ENCODE measurements at regions of chr19 and their contacts with region 1.

Region 1: DNA sequence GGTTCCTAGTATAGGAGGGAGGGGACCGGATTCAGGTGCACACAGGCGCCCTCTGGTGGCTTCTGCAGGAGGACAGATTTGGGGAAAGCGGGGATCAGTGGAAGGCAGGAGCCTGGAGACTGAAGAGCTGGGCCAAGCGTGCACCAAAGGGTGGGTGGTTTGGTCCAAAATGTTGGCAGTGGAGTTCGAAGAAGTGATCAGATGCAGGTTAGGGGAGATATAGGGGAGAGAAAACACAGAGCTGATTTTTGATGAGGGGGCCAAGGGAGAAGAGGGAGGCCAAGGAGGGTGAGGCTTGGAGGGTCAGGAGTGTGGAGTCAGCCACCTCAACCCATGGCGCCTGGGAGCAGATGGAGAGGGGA is 6.8 kb upstream of the CARM1 start:
- DNase-seq: peak; percentile 91
- ATAC-seq: peak; percentile 88

Region 2: GRCh38 chr19:10654493-10655304 is 209.8 kb before region 1 on chr19:
- intact Hi-C with region 1: loop called (anchors 5 kb)
- DNase-seq: peak; percentile 55
- ATAC-seq: peak; percentile 40

Region 3: DNA sequence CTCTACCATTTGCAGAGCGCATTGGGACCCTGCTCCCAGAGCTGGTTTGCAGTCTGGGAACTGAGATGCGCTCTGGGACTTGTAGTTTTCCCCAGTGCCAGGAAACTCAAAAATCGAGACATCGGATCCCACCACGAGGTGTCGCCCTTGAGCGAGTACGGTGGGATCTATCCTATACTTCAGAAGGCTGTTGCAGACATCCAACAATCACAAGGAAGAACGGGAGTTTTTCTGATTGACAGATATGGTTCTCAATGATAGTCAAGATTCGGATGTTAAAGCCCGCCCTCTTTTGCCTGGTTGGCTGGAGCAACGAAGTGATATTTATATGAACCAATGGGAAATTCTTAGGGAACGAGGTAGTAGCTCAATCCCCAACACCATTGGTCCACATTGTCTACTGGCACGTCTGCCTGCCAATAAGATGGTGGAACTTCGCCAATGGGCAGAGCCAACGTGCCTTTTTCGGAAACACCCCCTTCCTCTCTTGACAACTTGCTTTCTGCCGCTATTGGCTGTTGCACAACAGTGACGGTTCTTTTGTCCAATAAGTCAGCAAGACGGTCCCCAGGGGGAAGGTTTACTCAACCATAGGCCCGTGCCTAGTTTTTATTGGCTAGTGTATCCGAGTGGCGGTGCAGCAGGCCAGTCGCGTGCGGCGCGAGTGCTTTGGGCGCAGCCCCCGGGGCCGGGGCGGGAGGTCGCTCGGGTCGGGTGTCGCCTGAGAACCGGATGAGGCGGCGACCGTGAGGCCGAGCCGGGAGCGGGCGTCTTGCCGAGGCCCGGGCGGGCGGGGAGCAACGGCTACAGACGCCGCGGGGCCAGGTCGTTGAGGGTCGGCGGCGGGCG is 146.9 kb before region 1 on chr19 and contains the start of gene DNM2:
- intact Hi-C with region 1: loop called (anchors 2 kb)
- DNase-seq: peak; percentile 99
- ATAC-seq: peak; percentile 93
- total RNA-seq, gene DNM2: 180 TPM

Region 4: DNA sequence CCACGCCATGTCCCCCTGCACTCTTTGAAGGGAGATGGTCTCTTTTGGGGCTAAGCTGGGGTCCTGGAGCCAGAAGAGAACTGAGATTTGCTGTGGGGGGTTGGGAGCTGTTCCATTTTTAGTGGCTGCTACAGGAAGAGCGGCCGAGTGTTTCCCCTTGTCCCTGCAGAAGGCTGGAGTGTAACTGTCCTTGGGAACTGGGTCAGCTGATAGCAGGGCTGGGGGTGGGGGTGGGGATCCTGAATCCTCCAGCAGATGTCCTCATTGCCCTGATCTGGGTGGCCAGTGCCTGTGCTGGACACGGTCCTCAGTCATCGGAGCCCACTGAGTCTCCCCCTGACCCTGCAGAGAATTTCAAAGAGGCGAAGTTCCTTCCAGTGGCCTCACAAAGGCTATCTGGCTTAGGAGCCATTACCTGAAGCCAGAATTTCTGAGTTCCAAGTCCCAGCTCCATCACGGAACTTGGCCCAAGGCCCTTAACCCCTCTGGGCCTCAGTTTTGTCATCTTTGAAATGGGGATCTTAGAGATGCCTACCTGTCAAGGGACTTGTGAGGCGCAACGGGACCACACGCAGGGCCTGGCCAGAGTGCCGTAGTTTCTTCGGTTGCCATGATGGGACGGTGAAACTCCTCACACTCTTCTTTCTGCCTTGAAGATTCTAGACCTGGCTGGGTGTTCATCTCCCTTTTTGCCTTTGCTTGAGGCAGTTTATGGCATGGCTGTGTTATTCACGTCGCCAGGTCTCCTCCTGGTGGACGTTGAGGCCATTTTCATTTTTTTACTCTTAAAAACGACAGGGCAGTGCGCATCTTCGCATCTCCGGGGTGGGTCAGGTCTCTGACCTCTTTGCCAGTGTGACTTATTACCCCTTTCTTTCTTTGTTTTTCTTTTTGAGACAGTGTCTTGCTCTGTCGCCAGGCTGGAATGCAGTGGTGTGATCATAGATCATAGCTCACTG is 94.7 kb before region 1 on chr19:
- intact Hi-C with region 1: loop called (anchors 2 kb)
- DNase-seq: peak; percentile 73
- ATAC-seq: peak; percentile 79

Region 5: DNA sequence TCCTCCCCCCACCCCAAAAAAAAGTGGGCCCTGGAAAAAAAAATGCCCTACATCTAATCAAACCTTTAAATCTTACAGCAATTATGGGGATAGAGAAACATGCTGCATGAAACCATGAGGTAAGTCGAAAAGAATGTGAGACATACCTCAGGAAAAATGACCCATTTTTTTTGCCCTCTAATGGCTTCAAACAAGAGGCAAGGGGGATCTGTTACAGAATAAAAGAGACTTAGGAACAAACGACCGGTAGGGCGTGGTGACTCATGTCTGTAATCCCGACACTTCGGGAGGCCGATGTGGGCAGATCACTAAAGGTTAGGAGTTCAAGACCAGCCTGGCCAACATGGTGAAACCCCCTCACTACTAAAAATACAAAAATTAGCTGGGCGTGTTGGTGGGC is 546.2 kb after region 1 on chr19:
- intact Hi-C with region 1: no loop called
- DNase-seq: no peak
- ATAC-seq: no peak

Measured in Right ventricle myocardium superior (tissue), 1 donor.